ENCODE measurements at regions of chr12 and their contacts with region 1.

Region 1: DNA sequence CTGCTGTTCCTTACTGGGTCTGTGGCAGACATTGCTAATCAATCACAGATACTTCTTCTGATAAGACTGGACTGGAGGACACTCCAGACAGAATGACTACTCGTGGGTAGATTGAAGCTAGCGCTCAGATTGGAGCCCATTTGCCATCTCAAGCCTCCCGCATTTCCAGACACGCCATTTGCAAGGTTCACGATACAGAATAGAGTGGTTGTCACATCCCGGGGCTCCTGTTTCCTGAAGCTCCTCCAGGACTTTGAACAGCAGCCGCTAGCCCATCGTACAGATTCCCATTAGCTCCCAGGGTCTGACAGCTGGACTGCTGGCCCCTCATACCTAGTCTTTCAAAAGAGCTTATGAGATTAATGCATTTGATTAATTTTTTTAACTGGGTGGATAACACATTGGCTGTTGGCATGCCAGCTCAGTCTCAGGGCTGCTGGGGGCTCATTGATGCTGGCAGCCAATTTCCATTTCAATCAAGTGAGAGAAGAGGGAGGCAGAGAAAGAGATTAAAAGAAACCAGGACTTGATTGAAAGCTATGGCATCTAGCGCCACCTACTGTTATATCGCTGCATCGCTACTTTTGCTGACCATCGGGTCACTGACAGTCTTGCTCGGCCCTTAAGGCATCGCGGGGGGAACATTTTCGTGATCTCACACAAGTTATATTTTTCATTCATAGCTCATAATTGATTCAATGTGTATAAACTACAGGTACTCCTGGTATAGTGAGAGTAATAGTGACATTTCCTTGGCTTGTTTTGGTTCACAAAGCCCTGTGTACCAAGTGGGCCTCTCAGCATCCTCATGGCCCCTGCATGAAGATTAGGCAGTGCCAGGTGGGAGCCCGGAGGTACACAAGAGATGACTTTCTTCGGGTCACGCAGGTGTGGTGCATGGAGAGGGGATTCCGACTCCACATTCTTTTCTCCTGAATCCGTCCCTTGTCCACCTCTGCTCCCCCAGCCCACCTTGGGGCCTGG is 78.6 kb downstream of the CCDC60 start:
- DNase-seq: peak; percentile 43
- ATAC-seq: peak; percentile 54
- H3K4me3 ChIP-seq: no peak overlapping the region
- H3K27ac ChIP-seq: no peak overlapping the region
- H3K4me1 ChIP-seq: no peaks in the 10 kb centered on the region
- H3K27me3 ChIP-seq: no peaks in the 10 kb centered on the region; a peak in 1 of 5 replicates
- CTCF ChIP-seq: peak; percentile 81
- EP300 ChIP-seq: no peak
- POLR2A ChIP-seq: no peak
- RAD21 ChIP-seq: peak; percentile 65

Region 2: GRCh38 chr12:119020406-119021360 is 392.4 kb before region 1 on chr12:
- CTCF ChIA-PET with region 1: interaction called, 3 read pairs
- POLR2A ChIA-PET with region 1: no interaction called
- in situ Hi-C with region 1: loop called (anchors 25 kb)
- intact Hi-C with region 1: no loop called
- DNase-seq: peak; percentile 36
- ATAC-seq: peak; percentile 80
- H3K4me3 ChIP-seq: no peak overlapping the region
- H3K27ac ChIP-seq: no peak overlapping the region
- H3K4me1 ChIP-seq: no peaks in the 10 kb centered on the region
- H3K27me3 ChIP-seq: peaks cover 0 to 3% of the 10 kb centered on the region in 2 experiments; a peak in 1 of 5 replicates
- CTCF ChIP-seq: peak; percentile 64
- EP300 ChIP-seq: no peak
- POLR2A ChIP-seq: no peak
- RAD21 ChIP-seq: no peak

Region 3: GRCh38 chr12:119444456-119445044 is 31.4 kb after region 1 on chr12:
- CTCF ChIA-PET with region 1: no interaction called
- POLR2A ChIA-PET with region 1: no interaction called
- in situ Hi-C with region 1: no loop called
- intact Hi-C with region 1: no loop called
- DNase-seq: peak; percentile 72
- ATAC-seq: peak; percentile 85
- H3K4me3 ChIP-seq: no peak overlapping the region
- H3K27ac ChIP-seq: no peak overlapping the region
- H3K4me1 ChIP-seq: no peaks in the 10 kb centered on the region
- H3K27me3 ChIP-seq: no peaks in the 10 kb centered on the region
- CTCF ChIP-seq: peak; percentile 82
- EP300 ChIP-seq: no peak
- POLR2A ChIP-seq: no peak
- RAD21 ChIP-seq: peak; percentile 46; the same call in 1 of the 2 replicates

Region 4: GRCh38 chr12:119468296-119468695 is 55.2 kb after region 1 on chr12:
- CTCF ChIA-PET with region 1: no interaction called
- POLR2A ChIA-PET with region 1: no interaction called
- in situ Hi-C with region 1: no loop called
- intact Hi-C with region 1: no loop called
- DNase-seq: no peak
- ATAC-seq: no peak
- H3K4me3 ChIP-seq: no peak overlapping the region
- H3K27ac ChIP-seq: no peak overlapping the region
- H3K4me1 ChIP-seq: no peaks in the 10 kb centered on the region
- H3K27me3 ChIP-seq: no peaks in the 10 kb centered on the region; a peak in 1 of 5 replicates
- CTCF ChIP-seq: no peak
- EP300 ChIP-seq: no peak
- POLR2A ChIP-seq: no peak
- RAD21 ChIP-seq: no peak

Region 5: GRCh38 chr12:119659289-119659897 is 246.3 kb after region 1 on chr12:
- CTCF ChIA-PET with region 1: no interaction called
- POLR2A ChIA-PET with region 1: no interaction called
- in situ Hi-C with region 1: no loop called
- intact Hi-C with region 1: no loop called
- DNase-seq: peak; percentile 46
- ATAC-seq: no peak
- H3K4me3 ChIP-seq: no peak overlapping the region
- H3K27ac ChIP-seq: no peak overlapping the region
- H3K4me1 ChIP-seq: peaks cover 1% of the 10 kb centered on the region; the same call in 1 of the 2 replicates
- H3K27me3 ChIP-seq: no peaks in the 10 kb centered on the region
- CTCF ChIP-seq: peak; percentile 59
- EP300 ChIP-seq: no peak
- POLR2A ChIP-seq: no peak
- RAD21 ChIP-seq: no peak